Dorsolateral prefrontal cortex (tissue), 120 donors: ENCODE measurements at regions of chr10 and their contacts with region 1.

Region 1: GRCh38 chr10:6920072-6921019 is 340.3 kb upstream of the PRKCQ start:
- DNase-seq: peak; percentile 71 to 88 (median 84)
- H3K4me3 ChIP-seq: peak overlapping the region in 45 of 59 donors; percentile 5 to 54 (median 31)
- H3K27ac ChIP-seq: peak overlapping the region in 42 of 59 donors; percentile 4 to 74 (median 52)
- H3K27me3 ChIP-seq: peaks cover 0 to 3% (median 0%) of the 10 kb centered on the region in 45 donors
- CTCF ChIP-seq: peak in 55 of 56 donors; percentile 35 to 86 (median 74)

Region 2: DNA sequence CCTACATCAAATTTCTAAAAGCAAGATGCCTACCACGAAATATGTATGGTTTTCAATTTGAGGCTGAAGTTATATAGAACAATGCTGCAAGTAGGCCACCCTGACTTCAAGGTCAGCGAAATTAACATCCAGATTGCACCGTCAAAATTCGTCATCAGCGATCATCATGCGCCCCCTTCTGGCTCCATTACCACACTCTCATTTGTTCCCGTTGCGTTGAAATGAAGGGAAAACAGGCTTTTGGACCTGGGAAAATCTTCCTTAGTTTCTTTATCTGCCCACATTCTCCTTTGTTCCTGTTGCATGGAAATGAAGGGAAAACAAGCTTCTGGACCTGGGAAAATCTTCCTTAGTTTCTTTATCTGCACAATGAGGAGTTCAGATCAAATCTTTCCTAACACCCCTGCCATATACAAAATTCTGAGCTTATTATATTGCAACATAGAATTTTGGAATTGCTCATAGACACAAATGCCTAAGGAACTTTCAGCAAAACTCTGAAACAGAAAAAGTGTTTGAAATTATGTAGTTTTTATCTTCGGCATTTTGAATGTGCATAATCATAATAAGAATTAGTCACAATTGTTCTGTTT is 242.0 kb before region 1 on chr10:
- intact Hi-C with region 1: loop called in 1 of 2 experiments (anchors 5 kb)
- DNase-seq: peak in 7 of 10 donors; percentile 8 to 56 (median 40)
- H3K4me3 ChIP-seq: peak overlapping the region in 1 of 59 donors; percentile 10
- H3K27ac ChIP-seq: no peak overlapping the region
- H3K27me3 ChIP-seq: peaks cover 0 to 5% (median 0%) of the 10 kb centered on the region in 45 donors
- CTCF ChIP-seq: peak; percentile 37 to 82 (median 66)

Region 3: DNA sequence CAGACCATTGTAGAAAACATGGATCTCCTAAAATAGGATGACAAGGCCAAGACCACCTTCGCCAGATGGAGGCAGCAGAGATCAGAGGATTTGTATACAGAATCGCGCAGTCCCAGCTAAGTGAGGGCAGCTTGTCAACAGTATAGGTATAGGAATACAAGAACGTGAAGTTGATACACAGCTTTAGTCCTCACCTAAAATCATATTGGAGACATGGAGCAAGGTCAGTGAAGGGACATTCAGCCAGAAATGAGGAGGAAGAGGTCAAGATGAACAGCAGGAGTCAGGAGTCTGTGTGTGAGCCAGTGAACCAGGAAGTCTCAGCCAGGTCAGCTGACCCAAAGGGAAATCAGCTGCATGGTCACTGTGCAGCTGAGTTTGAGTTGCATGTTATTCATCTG is 76.9 kb before region 1 on chr10:
- intact Hi-C with region 1: loop called in 1 of 2 experiments (anchors 5 kb)
- DNase-seq: peak in 8 of 10 donors; percentile 35 to 80 (median 58)
- H3K4me3 ChIP-seq: peak overlapping the region in 8 of 59 donors; percentile 7 to 41 (median 24)
- H3K27ac ChIP-seq: peak overlapping the region in 35 of 59 donors; percentile 2 to 82 (median 50)
- H3K27me3 ChIP-seq: no peaks in the 10 kb centered on the region
- CTCF ChIP-seq: peak in 53 of 56 donors; percentile 16 to 77 (median 49)

Region 4: GRCh38 chr10:6987536-6987945 is 67.2 kb after region 1 on chr10:
- intact Hi-C with region 1: loop called in 1 of 2 experiments (anchors 1 kb)
- DNase-seq: peak; percentile 12 to 88 (median 75)
- H3K4me3 ChIP-seq: peak overlapping the region in 32 of 59 donors; percentile 3 to 53 (median 31)
- H3K27ac ChIP-seq: peak overlapping the region; percentile 58 to 100 (median 96)
- H3K27me3 ChIP-seq: no peaks in the 10 kb centered on the region
- CTCF ChIP-seq: peak in 13 of 56 donors; percentile 8 to 40 (median 19)

Region 5: GRCh38 chr10:7121154-7121810 is 200.9 kb after region 1 on chr10:
- intact Hi-C with region 1: loop called in 1 of 2 experiments (anchors 5 kb)
- DNase-seq: peak in 7 of 10 donors; percentile 32 to 67 (median 56)
- H3K4me3 ChIP-seq: no peak overlapping the region
- H3K27ac ChIP-seq: no peak overlapping the region
- H3K27me3 ChIP-seq: peaks cover 0 to 6% (median 0%) of the 10 kb centered on the region in 45 donors
- CTCF ChIP-seq: peak; percentile 39 to 85 (median 68)

Region 6: DNA sequence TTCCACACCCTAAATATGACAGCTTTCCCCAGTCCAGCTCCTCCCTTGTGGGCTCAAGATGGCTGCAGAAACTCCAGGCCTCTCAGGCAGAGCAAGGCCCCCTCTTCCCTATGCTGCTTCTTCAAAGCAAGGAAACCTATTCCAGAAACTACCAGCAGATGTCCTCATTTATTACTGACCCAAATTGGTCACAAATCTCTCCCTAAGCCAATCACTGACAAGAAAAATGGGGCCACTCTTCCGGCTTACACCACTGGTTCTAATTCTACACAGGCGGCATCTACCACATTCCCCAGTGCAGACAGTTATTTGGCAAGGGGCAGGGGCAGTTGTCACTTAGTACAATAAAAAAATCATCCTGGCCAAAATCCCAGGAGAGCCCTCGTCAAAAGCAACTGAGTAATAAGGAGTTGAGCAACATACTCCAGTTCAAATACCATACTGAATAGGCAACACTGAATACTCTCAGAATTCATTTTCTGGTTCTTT is 340.1 kb after region 1 on chr10:
- intact Hi-C with region 1: loop called (anchors 2 to 10 kb)
- DNase-seq: peak in 5 of 10 donors; percentile 38 to 63 (median 45)
- H3K4me3 ChIP-seq: peak overlapping the region in 4 of 59 donors; percentile 9 to 22 (median 14)
- H3K27ac ChIP-seq: peak overlapping the region in 24 of 59 donors; percentile 5 to 65 (median 28)
- H3K27me3 ChIP-seq: no peaks in the 10 kb centered on the region
- CTCF ChIP-seq: peak; percentile 49 to 88 (median 79)